ENCODE measurements at regions of chr3 and their contacts with region 1.

Region 1: DNA sequence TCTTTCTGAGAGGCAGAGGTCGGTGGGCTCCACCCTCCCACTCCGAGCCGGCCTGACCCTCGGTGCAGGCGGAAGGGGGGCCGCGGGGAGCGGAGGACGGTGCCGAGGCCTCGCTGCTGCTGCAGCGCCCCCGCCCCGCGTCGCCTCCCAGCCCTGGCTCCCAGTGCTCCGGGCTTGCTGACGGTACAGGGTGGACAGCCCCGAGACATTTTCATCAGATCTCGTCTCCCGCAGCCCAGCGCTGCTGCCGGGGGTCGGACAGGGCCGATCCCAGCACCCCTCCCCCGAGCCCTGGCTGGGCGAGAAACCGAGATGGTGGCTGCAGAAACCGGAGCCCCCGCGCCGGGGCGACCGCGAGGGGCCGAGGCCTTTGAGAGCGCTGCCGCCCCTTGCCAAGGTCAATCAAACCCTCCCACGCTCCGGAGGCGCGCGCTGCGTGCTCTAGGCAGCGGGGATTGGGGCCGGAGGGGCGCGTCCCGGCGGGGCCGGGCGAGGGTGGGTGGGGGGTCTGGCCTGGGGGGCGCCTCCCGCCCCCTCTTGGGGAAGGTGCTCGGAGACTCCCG is 42.5 kb downstream of the EPHB3 start:
- DNase-seq: no peak
- H3K4me3 ChIP-seq: no peak overlapping the region
- H3K27ac ChIP-seq: no peak overlapping the region
- H3K4me1 ChIP-seq: peaks cover 28% of the 10 kb centered on the region
- H3K27me3 ChIP-seq: no peaks in the 10 kb centered on the region
- CTCF ChIP-seq: no peak

Region 2: GRCh38 chr3:184582646-184583577 is 21.2 kb before region 1 on chr3:
- CTCF ChIA-PET with region 1: no interaction called
- dilution Hi-C with region 1: no loop called
- in situ Hi-C with region 1: no loop called
- intact Hi-C with region 1: no loop called
- DNase-seq: no peak
- H3K4me3 ChIP-seq: no peak overlapping the region
- H3K27ac ChIP-seq: no peak overlapping the region
- H3K4me1 ChIP-seq: peaks cover 21% of the 10 kb centered on the region
- H3K27me3 ChIP-seq: no peaks in the 10 kb centered on the region
- CTCF ChIP-seq: no peak

Region 3: DNA sequence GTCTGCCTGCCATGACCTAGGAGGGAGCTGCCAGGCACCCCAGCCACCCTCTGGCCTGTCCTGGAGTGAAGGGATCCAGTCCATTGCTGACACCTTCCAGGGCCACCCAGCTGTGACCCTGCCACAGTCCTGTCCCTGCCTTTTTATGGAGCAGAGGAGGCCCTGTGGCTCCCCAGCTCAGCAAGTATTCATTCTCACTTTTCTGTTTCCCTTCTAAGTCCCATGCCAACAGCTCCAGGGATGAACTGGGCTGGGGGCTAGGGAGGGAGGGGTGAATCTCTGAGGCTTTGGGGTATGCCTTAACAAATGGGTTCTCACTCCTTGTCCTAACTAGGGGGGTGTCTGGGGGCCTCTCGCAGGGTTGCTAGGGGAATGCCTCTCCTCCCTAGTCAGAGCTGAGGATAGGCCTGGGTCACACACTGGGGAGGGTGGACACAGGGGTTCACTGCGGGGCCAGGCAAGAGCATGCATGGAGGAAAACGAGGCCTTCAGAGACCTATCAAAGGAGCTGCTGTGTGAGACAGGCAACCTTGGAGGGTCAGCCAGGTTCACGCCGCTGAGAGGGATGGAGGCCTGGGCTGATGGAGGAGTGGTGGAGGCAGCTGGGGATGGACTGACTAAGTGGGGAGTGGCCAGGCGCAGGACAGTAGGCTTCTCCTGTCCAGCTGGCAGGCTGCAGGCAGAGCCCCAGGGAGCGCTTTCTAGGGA is 10.7 kb before region 1 on chr3:
- CTCF ChIA-PET with region 1: no interaction called
- dilution Hi-C with region 1: no loop called
- in situ Hi-C with region 1: no loop called
- intact Hi-C with region 1: no loop called
- DNase-seq: no peak
- H3K4me3 ChIP-seq: no peak overlapping the region
- H3K27ac ChIP-seq: no peak overlapping the region
- H3K4me1 ChIP-seq: no peaks in the 10 kb centered on the region
- H3K27me3 ChIP-seq: no peaks in the 10 kb centered on the region
- CTCF ChIP-seq: no peak

Region 4: DNA sequence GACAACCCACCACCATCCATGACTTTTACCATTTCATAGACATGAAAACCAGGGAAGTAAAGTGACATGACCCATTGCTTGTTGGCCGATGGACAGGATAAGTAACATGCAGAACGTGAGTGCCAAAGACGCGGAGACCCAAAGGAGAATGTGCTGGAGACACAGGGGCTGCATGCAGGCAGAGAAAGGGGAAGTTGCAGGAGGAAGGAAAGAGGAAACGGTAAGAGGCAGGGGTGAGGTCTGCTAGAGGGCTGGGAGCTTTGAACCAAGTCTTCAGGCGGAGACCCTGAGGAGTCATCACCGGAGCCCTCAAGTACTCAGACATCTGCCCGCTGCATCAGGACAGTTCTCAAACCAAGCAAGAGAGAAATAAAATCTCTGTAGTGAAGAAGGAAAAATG is 72.8 kb after region 1 on chr3:
- CTCF ChIA-PET with region 1: no interaction called
- dilution Hi-C with region 1: no loop called
- in situ Hi-C with region 1: no loop called
- intact Hi-C with region 1: no loop called
- DNase-seq: no peak
- H3K4me3 ChIP-seq: no peak overlapping the region
- H3K27ac ChIP-seq: no peak overlapping the region
- H3K4me1 ChIP-seq: no peaks in the 10 kb centered on the region
- H3K27me3 ChIP-seq: no peaks in the 10 kb centered on the region
- CTCF ChIP-seq: no peak

Region 5: DNA sequence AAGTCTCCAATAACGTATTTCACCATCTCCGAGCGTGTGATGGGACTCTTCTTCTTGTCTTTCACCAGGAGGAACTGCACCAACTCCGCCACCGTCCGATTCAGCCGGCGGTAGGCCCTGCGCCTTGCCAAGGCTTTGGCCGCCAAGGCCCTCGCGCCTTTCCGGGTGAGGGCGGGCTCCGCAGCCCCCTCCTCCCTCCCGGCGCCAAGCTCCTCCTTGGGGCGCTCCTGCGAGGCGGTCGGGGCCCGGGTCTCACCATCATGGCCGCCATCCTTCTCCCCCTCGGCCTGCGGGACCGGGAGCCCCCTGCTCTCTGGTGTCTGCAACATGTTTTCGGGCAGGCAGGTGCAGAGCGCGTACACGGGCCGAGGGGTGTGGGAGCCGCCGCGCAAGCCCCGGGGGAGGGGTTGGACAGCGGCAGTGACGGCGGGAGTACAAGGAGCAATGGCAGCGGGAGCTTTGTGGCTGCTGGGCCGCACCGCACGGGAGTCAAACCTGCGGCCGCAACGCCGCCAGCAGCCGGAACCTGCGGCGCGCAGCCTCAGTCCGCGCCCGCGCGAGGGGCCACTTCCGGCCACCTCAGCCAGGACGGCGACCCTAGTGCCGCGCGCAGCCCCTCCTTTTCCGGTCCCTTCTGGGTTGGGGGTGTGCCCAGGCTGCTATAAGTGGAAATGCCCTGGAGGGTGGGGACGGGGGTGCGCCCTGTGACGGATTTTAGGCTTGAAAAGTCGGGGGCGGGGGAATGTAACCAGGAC is 107.5 kb after region 1 on chr3 and contains the start of gene MAGEF1:
- CTCF ChIA-PET with region 1: no interaction called
- dilution Hi-C with region 1: no loop called
- in situ Hi-C with region 1: no loop called
- intact Hi-C with region 1: loop called (anchors 2 kb)
- DNase-seq: peak; percentile 77
- H3K4me3 ChIP-seq: peak within 1 kb of the TSS; percentile 74 to 90 (median 83)
- H3K27ac ChIP-seq: peak within 1 kb of the TSS; percentile 80
- H3K4me1 ChIP-seq: peaks cover 16% of the 10 kb centered on the region
- H3K27me3 ChIP-seq: no peaks in the 10 kb centered on the region
- CTCF ChIP-seq: no peak
- total RNA-seq, gene MAGEF1: 19.0 to 27.8 TPM

Region 6: GRCh38 chr3:184981071-184981470 is 377.0 kb after region 1 on chr3:
- CTCF ChIA-PET with region 1: no interaction called
- dilution Hi-C with region 1: no loop called
- in situ Hi-C with region 1: no loop called
- intact Hi-C with region 1: no loop called
- DNase-seq: no peak
- H3K4me3 ChIP-seq: no peak overlapping the region
- H3K27ac ChIP-seq: no peak overlapping the region
- H3K4me1 ChIP-seq: no peaks in the 10 kb centered on the region
- H3K27me3 ChIP-seq: no peaks in the 10 kb centered on the region
- CTCF ChIP-seq: no peak

Measured in mammary epithelial cell (primary cell).